AG04449 (cell line): ENCODE measurements at regions of chr5 and their contacts with region 1.

Region 1: GRCh38 chr5:95846554-95847260 is 24.2 kb upstream of the GLRX start:
- DNase-seq: no peak
- H3K4me3 ChIP-seq: no peak overlapping the region
- CTCF ChIP-seq: peak; percentile 82

Region 2: GRCh38 chr5:95655575-95655974 is 191.1 kb before region 1 on chr5:
- CTCF ChIA-PET with region 1: interaction called, 14 read pairs
- POLR2A ChIA-PET with region 1: no interaction called
- DNase-seq: no peak
- H3K4me3 ChIP-seq: no peak overlapping the region
- CTCF ChIP-seq: no peak

Region 3: GRCh38 chr5:95664204-95664786 is 182.4 kb before region 1 on chr5:
- CTCF ChIA-PET with region 1: interaction called, 92 read pairs
- POLR2A ChIA-PET with region 1: no interaction called
- DNase-seq: no peak
- H3K4me3 ChIP-seq: no peak overlapping the region
- CTCF ChIP-seq: peak; percentile 59

Region 4: GRCh38 chr5:95786901-95787300 is 59.8 kb before region 1 on chr5:
- CTCF ChIA-PET with region 1: interaction called, 318 read pairs
- POLR2A ChIA-PET with region 1: no interaction called
- DNase-seq: no peak
- H3K4me3 ChIP-seq: no peak overlapping the region
- CTCF ChIP-seq: no peak

Region 5: GRCh38 chr5:95822542-95823181 is 24.0 kb before region 1 on chr5 and contains the start of gene GLRX:
- CTCF ChIA-PET with region 1: interaction called, 18 read pairs
- POLR2A ChIA-PET with region 1: interaction called, 3 read pairs
- DNase-seq: peak; percentile 86
- H3K4me3 ChIP-seq: peak within 1 kb of the TSS; percentile 83
- CTCF ChIP-seq: no peak

Region 6: DNA sequence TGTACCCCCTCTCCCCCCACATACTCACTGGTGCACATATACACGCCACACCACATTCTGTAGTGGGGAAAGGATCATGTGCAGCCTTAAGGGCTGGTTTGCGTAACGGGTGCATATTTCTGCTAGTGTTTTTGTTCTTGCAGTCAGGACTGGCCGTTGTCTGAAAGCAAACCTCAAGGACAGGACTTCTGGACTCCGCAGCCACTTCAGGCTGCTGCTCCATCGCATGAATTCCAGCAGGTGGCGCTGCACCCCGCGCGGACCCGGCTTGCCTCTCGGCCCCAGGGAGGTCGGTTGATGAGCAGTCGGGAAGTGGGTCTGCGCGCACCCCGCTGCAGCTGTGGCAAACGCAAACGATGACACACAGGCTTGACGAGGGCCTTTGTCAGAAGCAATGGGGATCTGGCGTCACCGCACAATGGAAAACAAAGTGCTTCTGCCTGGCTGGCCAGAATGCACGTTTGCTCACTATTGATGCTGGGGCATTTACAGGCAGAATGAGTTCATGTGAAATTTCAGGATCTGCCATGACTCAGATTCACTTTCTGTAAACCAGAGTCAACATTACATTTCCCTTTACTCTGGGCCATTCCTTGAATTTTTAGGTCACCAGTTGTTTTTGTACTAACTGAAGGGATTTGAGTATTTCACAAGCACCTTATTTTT is 12.1 kb after region 1 on chr5:
- CTCF ChIA-PET with region 1: interaction called, 41 read pairs
- POLR2A ChIA-PET with region 1: no interaction called
- DNase-seq: peak; percentile 97
- H3K4me3 ChIP-seq: peak overlapping the region; percentile 57
- CTCF ChIP-seq: peak; percentile 99